ENCODE measurements at regions of chr10 and their contacts with region 1.

Region 1: GRCh38 chr10:17742918-17743317 is 9.1 kb upstream of the TMEM236 start:
- DNase-seq: peak; percentile 45
- ATAC-seq: peak; percentile 57
- H3K4me3 Mint-ChIP-seq: peak overlapping the region; percentile 24
- H3K27ac Mint-ChIP-seq: no peak overlapping the region
- H3K4me1 Mint-ChIP-seq: peaks cover 5% of the 10 kb centered on the region
- H3K27me3 Mint-ChIP-seq: no peaks in the 10 kb centered on the region
- CTCF ChIP-seq: no peak

Region 2: GRCh38 chr10:18214691-18215563 is 472.0 kb after region 1 on chr10:
- CTCF ChIA-PET with region 1: no interaction called
- POLR2A ChIA-PET with region 1: no interaction called
- intact Hi-C with region 1: loop called (anchors 5 kb)
- DNase-seq: no peak
- ATAC-seq: no peak
- H3K4me3 Mint-ChIP-seq: no peak overlapping the region
- H3K27ac Mint-ChIP-seq: no peak overlapping the region
- H3K4me1 Mint-ChIP-seq: no peaks in the 10 kb centered on the region
- H3K27me3 Mint-ChIP-seq: no peaks in the 10 kb centered on the region
- CTCF ChIP-seq: no peak

Measured in activated B cell treated with CpG ODN at 0.5 μM for 24 hours (primary cell).